ENCODE measurements at regions of chr6 and their contacts with region 1.

Region 1: GRCh38 chr6:26122793-26123674 is 35.8 kb downstream of the HFE start:
- H3K4me3 ChIP-seq: peak overlapping the region; percentile 50
- H3K27ac ChIP-seq: peak overlapping the region; percentile 60
- H3K4me1 ChIP-seq: no peaks in the 10 kb centered on the region
- CTCF ChIP-seq: no peak

Region 2: GRCh38 chr6:25889877-25890853 is 232.9 kb before region 1 on chr6:
- CTCF ChIA-PET with region 1: no interaction called
- POLR2A ChIA-PET with region 1: no interaction called
- H3K4me3 ChIP-seq: no peak overlapping the region
- H3K27ac ChIP-seq: no peak overlapping the region
- H3K4me1 ChIP-seq: no peaks in the 10 kb centered on the region
- CTCF ChIP-seq: no peak

Region 3: DNA sequence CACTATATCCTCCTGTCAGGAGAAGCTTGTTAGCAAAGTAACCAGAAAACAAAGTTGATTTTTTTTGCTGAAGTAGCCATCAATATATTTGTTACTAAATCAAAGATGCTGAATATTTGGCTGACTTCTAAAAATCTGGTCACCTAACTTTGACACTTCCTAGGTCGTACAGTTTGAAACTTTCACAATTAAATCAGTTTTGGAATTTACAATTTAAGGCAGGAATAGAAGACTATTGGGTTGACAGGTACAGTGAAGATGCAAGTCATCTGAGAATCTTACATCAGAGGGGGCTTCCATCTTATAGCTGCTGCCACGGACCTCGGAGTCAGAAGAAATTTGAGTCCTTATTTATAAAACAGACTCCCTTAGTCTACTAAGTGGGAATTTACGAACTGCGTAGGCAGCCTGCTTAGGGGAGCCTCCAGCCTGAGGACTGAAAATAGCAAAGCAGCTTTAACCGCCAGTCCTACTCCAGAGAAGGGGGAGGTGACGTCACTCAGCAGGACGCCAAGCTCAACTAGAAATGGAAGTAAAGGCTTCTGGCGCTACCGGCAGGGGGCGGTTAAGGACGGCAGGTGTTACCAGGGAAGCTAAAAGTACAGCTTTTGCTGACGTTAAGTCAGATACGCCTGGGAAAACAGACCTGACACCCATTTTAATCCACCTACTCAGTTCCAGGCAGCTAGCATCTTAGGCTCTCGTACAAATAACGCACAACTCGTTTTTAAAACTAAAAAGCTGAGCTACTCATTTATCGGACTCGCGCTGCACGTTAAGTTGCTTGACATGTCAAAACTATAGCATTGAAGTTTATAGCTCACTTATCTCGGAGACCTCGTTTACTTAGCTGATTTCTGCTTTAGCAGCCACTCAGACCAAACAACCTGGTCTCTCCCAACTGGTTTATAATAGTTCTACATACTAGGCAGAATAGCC is 96.9 kb before region 1 on chr6:
- CTCF ChIA-PET with region 1: interaction called, 10 read pairs
- POLR2A ChIA-PET with region 1: interaction called, 100 read pairs
- H3K4me3 ChIP-seq: peak overlapping the region; percentile 48
- H3K27ac ChIP-seq: peak overlapping the region; percentile 47
- H3K4me1 ChIP-seq: peaks cover 18% of the 10 kb centered on the region
- CTCF ChIP-seq: peak; percentile 81

Region 4: GRCh38 chr6:26054857-26055669 is 68.0 kb before region 1 on chr6:
- CTCF ChIA-PET with region 1: interaction called, 5 read pairs
- POLR2A ChIA-PET with region 1: interaction called, 34 read pairs
- H3K4me3 ChIP-seq: peak overlapping the region; percentile 85
- H3K27ac ChIP-seq: peak overlapping the region; percentile 81
- H3K4me1 ChIP-seq: peaks cover 5% of the 10 kb centered on the region; the same call in 1 of the 2 replicates
- CTCF ChIP-seq: no peak

Region 5: DNA sequence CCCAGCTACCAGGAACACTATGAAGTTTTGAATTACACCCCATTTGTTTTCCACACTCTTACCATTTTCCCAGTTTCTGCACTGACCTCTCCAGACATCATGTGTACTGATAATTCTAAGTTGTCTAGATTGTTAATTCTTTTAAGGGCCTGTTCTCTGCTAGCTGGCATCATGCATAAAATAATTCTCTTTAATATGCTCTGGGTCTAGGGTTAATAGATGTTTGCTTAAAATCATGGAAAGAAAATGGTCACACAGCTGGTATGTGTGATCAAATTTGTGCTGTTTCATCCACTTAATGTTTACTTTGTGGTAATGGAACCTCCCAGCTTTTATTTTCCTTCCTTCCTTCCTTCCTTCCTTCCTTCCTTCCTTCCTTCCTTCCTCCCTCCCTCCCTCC is 13.3 kb after region 1 on chr6:
- CTCF ChIA-PET with region 1: no interaction called
- POLR2A ChIA-PET with region 1: interaction called, 12 read pairs
- H3K4me3 ChIP-seq: no peak overlapping the region
- H3K27ac ChIP-seq: no peak overlapping the region
- H3K4me1 ChIP-seq: no peaks in the 10 kb centered on the region
- CTCF ChIP-seq: no peak

Region 6: GRCh38 chr6:26175428-26176181 is 52.6 kb after region 1 on chr6:
- CTCF ChIA-PET with region 1: interaction called, 4 read pairs
- POLR2A ChIA-PET with region 1: interaction called, 33 read pairs
- H3K4me3 ChIP-seq: no peak overlapping the region
- H3K27ac ChIP-seq: no peak overlapping the region
- H3K4me1 ChIP-seq: no peaks in the 10 kb centered on the region; the same call in 1 of the 2 replicates
- CTCF ChIP-seq: peak; percentile 39; the same call in 1 of the 2 replicates

Region 7: GRCh38 chr6:26199057-26199772 is 76.2 kb after region 1 on chr6:
- CTCF ChIA-PET with region 1: no interaction called
- POLR2A ChIA-PET with region 1: interaction called, 23 read pairs
- H3K4me3 ChIP-seq: peak overlapping the region; percentile 45
- H3K27ac ChIP-seq: no peak overlapping the region; the same call in 1 of the 2 replicates
- H3K4me1 ChIP-seq: no peaks in the 10 kb centered on the region
- CTCF ChIP-seq: no peak

Region 8: DNA sequence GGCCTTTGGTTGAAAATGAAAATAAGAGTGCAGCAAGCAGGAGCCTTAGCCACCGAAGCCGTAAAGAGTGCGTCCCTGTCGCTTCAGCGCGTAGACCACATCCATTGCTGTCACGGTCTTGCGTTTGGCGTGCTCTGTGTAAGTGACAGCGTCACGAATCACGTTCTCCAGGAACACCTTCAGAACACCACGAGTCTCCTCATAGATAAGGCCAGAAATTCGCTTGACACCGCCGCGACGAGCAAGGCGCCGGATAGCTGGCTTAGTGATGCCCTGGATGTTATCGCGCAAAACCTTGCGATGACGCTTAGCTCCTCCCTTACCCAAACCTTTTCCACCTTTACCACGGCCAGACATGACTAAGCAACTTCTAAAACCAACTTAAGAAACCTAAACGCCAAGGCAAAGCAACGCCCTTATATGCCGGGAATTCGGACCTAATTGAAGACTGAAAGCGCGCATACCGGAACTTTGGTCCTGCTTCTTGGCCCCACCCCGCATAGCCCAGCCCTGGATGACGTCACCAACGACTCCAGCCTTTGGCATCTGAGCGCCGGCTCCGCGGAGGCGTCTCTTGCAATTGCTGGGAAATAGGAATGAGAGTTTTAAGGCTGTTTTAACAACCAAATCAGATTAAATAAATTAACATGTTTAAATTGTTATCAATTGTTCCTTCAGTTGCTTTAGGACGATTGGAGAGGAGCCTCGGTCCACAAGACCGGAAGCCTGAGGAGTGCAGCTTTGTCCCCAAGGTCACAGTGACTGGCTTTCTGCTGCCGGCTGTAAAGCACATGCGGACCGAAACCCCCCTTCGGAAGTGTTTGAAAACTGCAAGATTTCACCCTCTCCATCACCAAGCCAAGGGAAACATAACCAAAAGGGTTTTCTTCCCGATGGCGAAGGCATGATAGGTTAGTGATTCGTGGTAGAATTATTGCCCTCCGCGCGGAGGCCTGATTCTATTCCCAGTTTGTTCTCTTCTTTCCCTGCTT is 162.4 kb after region 1 on chr6:
- CTCF ChIA-PET with region 1: no interaction called
- POLR2A ChIA-PET with region 1: interaction called, 22 read pairs
- H3K4me3 ChIP-seq: peak overlapping the region; percentile 67
- H3K27ac ChIP-seq: peak overlapping the region; percentile 65
- H3K4me1 ChIP-seq: no peaks in the 10 kb centered on the region
- CTCF ChIP-seq: no peak

Region 9: GRCh38 chr6:26525838-26526237 is 402.8 kb after region 1 on chr6:
- CTCF ChIA-PET with region 1: no interaction called
- POLR2A ChIA-PET with region 1: no interaction called
- H3K4me3 ChIP-seq: no peak overlapping the region
- H3K27ac ChIP-seq: no peak overlapping the region
- H3K4me1 ChIP-seq: no peaks in the 10 kb centered on the region
- CTCF ChIP-seq: no peak

Region 10: DNA sequence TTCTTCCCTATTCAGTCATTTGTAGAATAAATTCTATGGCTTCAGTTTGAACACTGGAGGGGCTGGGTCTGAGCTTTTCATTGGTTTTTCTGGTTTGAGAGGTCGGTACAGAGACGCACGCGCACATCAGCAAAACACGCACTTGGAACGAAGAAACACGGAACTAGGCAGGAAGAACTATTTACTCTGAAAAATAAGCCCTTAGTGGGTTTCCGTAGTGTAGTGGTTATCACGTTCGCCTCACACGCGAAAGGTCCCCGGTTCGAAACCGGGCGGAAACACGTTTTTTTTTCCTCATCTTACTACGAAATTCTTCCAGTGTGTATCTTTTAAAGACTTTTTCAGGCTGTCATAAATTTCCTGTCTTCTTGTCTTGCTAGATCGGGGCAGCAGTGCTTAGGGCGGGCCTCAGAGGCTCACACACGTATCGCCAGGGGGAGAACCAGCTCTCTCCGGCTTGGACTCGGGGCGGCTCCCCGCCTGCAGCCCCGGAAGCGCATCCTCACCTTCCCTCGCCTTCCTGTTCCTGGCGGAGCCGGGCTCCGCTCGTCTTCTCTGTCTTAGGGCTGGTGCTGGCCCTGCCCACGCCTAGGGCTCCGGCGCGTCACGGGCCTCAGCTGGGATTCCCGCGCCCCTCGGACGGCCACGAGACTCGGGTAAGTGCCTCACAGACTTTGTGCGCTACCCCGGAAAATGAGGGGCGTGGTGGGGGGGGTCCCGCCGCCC is 415.0 kb after region 1 on chr6 and contains the start of gene HMGN4:
- CTCF ChIA-PET with region 1: no interaction called
- POLR2A ChIA-PET with region 1: no interaction called
- H3K4me3 ChIP-seq: peak within 1 kb of the TSS; percentile 76
- H3K27ac ChIP-seq: peak within 1 kb of the TSS; percentile 79
- H3K4me1 ChIP-seq: peaks cover 5% of the 10 kb centered on the region; the same call in 1 of the 2 replicates
- CTCF ChIP-seq: peak; percentile 65; the same call in 1 of the 2 replicates